ENCODE measurements at regions of chr15 and their contacts with region 1.

Region 1: DNA sequence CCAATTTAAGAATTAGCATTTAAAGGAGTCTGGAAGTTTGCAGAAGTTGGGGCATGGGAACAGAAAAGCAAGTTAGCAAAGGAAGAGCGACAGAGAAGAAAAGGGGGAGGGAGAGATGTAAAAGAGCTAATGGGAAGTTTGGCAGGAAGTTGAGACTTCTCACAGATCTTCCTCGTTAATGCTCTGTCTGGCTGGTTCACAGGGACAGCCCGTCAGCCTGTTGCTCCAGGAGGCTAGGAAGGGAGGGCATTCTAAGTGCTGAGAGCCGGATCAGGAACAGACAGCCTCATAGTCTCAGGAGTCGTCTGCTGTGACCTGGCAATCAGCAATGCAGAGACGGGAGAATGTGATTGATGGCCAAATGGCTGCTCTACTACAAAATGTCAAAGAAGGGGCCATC is 150.3 kb downstream of the AGBL1 start:
- DNase-seq: no peak
- ATAC-seq: no peak

Region 2: DNA sequence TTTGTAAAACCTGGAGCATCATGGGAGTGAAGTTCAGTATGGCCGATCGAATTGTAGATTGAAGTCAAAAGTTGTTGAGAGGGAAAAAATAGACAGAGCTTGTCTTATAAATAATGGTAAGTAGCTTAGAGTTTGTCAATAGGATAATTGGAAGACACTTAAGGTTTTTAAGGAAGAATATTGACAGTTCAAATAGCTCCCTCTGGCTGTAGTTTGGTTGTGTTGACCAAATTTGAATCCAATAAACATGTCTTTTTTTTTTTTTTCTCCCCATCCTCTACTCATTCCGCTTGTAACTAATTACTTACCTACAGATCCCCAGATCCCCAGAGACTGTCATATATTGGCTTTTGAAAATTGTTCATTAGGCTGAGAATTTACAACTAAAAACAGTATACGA is 526.8 kb after region 1 on chr15:
- intact Hi-C with region 1: loop called (anchors 10 kb)
- DNase-seq: no peak
- ATAC-seq: no peak

Measured in Right ventricle myocardium superior (tissue), 1 donor.